Cardiac septum (tissue), 1 donor: ENCODE measurements at regions of chr15 and their contacts with region 1.

Region 1: GRCh38 chr15:40044717-40045571 is 6.0 kb upstream of the SRP14 start:
- DNase-seq: peak; percentile 93

Region 2: DNA sequence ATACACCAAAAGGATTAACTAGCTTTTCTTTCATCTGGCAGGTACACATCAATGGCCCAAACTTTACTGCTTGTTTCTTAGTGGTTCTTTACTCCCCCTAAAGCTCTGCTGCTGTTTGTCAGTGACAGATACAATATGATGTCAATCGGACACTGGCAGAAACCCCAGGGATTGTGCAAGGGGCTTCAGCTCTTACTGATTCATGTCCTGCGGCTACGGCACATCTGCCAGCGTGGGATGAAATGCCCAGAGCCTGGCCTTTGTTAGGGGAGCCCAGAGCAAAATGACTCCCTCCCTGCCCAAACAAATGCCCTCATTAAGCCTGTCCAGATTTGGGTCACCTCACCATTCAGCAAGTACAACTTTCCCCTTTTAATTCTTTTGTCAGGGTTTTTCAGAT is 34.3 kb before region 1 on chr15:
- intact Hi-C with region 1: no loop called
- DNase-seq: no peak

Region 3: GRCh38 chr15:40098489-40099261 is 53.7 kb after region 1 on chr15:
- intact Hi-C with region 1: no loop called
- DNase-seq: peak; percentile 88

Region 4: GRCh38 chr15:40108855-40109735 is 64.2 kb after region 1 on chr15 and contains the start of gene BMF:
- intact Hi-C with region 1: loop called (anchors 2 kb)
- DNase-seq: peak; percentile 100
- total RNA-seq, gene BMF: 1.1 TPM

Region 5: DNA sequence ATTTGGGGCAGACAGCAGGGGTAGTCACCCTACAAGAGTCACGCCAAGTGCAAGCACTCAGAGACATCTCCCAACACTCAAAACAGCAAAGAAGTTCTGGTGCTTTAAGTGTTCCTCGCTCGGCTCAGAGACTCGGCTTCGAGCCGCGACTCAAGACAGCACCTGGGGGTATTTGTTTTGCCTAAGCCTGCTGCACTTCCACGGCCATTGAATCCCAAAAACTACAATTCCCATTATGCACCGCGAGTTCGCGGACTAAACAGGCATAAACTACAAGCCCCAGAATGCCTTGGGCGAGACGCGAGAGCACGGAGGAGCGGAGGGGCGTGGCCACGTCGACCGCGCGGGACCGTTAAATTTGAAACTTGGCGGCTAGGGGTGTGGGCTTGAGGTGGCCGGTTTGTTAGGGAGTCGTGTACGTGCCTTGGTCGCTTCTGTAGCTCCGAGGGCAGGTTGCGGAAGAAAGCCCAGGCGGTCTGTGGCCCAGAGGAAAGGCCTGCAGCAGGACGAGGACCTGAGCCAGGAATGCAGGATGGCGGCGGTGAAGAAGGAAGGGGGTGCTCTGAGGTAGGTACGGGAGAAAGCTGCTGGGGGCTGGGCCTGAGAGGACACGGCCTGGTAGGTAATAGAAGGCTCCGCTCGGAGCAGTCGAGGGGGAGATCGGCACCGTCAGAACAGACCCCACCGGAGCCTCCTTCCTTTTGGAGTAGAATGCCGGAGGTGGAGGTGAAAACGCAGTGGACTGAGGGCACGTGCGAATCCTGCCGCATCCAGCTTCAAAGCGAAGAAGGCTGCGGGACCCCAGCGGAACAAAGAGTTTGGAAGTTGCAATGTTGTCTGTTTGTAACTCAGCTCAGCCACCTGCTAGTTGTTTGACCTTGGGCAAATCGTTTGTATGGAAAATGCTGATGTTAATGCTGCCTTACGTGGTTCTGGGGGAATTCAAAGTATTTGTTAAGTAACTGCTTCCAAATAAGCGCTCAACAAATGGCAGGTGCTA is 116.0 kb after region 1 on chr15 and contains the start of gene BUB1B:
- intact Hi-C with region 1: loop called (anchors 5 kb)
- DNase-seq: peak; percentile 94
- total RNA-seq, gene BUB1B: 0.43 TPM

Region 6: GRCh38 chr15:40204100-40204499 is 159.2 kb after region 1 on chr15:
- intact Hi-C with region 1: no loop called
- DNase-seq: no peak

Region 7: DNA sequence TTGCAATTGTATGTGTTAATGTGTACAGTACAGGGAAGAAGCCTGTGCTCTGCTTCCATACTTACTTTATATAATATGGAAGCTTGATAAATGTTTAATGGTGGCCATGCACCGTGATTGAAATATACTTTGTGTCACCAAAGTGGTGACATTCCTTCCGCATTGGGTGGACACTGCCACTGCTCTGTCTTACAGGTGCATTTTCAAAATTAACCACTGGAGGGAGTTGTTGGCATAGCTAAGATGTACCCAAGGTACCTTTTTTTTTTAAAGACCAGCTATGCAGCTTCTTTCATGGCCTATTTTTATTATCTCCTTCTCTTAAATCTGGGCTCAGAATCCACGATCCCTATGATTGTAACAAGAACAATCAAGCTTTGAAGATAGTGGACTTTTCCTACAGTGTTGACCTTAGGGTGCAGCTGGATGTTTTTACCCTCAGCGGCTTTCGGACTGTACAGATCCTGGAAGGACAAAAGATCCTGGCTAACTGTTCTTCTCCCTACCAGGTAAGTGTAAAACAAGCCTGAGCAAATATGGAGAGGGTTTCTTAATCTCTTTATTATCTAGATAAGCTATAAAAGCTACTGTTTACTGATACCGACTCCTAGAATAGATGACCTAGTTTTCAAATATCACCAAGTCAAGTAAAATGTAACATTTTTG is 172.3 kb after region 1 on chr15:
- intact Hi-C with region 1: loop called (anchors 2 kb)
- DNase-seq: no peak

Region 8: DNA sequence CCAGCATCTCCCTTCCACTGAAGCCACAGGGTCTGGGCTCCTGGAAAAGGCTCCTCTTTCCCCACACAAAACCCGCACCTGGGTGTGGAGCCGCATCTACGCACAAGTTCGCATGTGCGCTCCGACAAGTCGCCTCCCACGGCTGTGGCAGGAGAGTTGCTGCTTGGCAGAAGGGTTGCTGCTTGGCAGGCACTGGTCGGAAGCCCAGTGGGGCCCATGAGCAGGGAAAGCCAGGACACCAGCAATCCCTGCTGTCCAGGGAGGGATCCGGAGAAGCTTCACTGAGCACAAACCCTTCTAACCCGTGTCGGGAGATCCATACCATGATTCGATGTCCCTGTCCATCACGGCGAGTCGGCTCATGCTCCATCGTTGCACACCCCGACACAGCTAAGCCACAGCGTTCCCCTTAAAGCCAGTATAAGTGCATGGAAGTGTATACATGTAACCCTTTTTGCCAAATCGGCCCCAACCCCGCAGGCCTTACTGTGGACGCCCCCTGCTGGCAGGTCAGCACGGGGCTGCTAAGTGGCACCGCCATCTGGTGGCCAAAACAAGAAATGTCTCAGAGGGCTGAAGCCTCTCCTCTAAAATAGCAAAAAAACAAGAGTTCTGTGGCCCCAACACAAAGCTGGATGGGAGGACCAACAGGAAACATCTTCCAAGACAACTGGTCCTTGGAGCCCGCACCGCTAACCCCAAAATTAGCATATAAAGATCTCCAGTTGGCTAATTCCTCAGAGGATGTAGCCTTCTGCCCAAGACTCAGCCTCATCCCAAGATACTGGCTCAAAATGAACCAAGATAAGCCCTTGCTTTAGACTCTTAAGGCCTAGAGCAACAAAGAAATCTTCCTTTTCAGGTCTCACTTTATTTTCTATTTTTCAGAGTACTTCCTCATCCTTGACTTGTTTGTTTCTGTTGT is 229.7 kb after region 1 on chr15:
- intact Hi-C with region 1: loop called (anchors 1 kb)
- DNase-seq: peak; percentile 91